Mammary epithelial cell (primary cell): ENCODE measurements at regions of chr1 and their contacts with region 1.

Region 1: GRCh38 chr1:201955009-201955728 is at the start of gene TIMM17A:
- DNase-seq: peak; percentile 97
- H3K4me3 ChIP-seq: peak within 1 kb of the TSS; percentile 70 to 92 (median 81)
- H3K27ac ChIP-seq: peak within 1 kb of the TSS; percentile 85
- H3K4me1 ChIP-seq: peaks cover 4% of the 10 kb centered on the region
- H3K27me3 ChIP-seq: no peaks in the 10 kb centered on the region
- CTCF ChIP-seq: no peak
- total RNA-seq, gene TIMM17A: 44.5 to 69.9 TPM

Region 2: DNA sequence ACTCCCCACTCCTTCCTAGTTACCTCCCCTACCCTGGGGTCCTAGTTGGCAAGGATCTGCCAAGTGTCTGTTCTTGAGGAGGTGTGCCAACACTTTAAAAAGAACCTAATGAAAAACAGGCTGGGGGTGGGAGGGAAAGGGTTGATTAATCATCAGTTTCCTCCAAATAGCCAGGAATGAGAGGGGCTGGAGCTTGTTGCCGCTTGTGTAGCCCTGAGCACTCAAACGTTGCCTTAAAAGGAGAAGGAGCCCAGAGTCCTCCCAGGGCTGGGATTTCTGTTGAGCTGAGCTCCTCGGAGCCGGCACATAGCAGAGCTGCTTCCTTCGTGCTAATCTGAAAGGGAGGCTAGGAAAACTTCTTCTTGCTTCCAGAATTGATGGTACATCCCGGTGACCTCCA is 50.6 kb before region 1 on chr1:
- CTCF ChIA-PET with region 1: no interaction called
- dilution Hi-C with region 1: no loop called
- in situ Hi-C with region 1: no loop called
- intact Hi-C with region 1: loop called (anchors 2 kb)
- DNase-seq: peak; percentile 80
- H3K4me3 ChIP-seq: no peak overlapping the region
- H3K27ac ChIP-seq: no peak overlapping the region
- H3K4me1 ChIP-seq: peaks cover 23% of the 10 kb centered on the region
- H3K27me3 ChIP-seq: no peaks in the 10 kb centered on the region
- CTCF ChIP-seq: no peak